PC-3 (cell line): ENCODE measurements at regions of chr1 and their contacts with region 1.

Region 1: DNA sequence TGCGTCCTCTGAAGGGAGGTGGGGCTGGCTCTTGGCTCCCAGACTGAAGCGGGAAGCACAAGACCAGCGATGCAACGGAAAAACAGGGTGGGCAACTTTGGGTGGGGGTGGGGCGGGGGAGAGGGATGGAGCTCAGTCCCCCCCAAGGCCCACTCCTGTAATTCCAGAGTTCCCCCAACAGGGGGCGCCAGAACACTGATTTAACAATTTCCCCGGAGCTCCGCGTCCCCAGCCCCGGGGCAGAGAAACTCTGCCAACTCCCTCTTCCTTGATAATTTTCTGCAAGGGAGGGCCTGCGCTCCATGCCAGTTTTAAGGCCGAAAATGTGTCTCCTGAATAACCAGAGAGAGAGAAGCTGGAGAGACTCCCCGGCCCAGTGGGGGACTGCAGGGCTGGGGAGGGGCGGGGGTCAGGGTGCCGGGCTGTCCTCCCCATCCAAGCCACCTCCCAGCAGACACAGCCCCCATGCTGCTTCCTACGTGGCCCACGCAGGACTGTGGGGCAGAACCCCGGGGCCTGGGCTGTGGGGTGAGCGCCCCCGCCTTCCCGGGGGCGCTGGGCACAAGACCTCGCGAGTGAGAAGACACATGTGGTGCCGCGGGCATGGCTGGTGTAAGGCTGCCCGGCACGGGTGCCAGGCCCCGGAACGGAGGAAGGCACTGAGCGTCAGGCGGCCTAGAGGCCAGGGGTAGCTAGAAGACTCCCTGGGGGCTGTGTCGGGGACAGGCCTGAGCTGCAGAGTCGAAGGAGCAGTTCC is 51.4 kb downstream of the KIF21B start:
- DNase-seq: peak; percentile 93
- ATAC-seq: peak; percentile 10; the same call in 1 of the 2 replicates
- H3K4me3 ChIP-seq: peak overlapping the region; percentile 26; the same call in 1 of the 2 replicates
- H3K27ac ChIP-seq: no peak overlapping the region
- H3K4me1 ChIP-seq: peaks cover 15% of the 10 kb centered on the region
- H3K27me3 ChIP-seq: no peaks in the 10 kb centered on the region
- CTCF ChIP-seq: peak; percentile 98

Region 2: DNA sequence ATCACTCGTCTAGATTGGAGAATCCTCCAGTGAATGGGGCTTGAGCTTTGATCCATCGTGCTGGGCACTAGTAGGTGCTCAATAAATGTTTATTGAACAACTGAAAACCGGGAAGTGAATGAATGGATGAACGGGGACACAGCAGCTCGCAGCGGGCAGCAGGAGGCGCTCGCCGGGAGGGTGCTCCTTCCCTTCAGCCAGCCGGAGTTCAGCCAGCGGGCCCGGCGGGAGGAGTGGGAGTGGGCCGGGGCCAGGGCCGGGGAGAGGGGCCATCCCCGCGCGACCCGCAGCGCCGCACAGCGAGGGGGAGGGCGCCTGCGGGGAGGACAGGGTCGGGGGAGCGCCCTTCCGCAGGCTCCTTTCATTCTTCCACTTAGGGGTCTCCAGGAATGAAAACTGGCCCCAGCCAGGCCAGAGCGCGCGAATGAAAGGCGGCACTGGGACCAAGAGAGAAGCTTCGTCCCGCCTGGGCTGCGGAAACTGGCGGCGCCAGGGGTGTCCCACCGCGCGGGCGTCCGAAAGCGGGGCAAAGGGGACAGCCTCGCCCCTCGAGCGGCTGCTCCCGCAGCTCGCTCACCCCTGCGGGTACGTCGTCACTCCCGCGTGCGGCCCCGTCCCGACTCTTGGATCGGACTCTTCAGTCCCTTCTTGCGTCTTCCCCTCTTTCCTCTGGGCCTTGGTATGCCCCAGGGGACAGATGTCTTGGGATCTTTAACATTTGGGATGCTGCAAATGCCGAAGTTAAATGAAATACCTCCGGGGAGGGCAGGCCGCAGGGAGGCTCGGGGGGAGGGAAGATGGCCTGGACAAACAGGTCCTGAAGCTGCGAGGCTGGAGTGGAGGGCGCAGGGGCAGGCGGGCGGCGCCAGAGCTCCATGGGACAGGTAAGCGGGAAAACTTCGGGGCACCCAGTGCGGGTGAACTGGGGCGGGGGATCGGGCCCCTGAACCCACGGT is 81.0 kb before region 1 on chr1:
- CTCF ChIA-PET with region 1: interaction called, 14 read pairs
- POLR2A ChIA-PET with region 1: no interaction called
- intact Hi-C with region 1: loop called (anchors 2 kb)
- DNase-seq: peak; percentile 95
- ATAC-seq: peak; percentile 51
- H3K4me3 ChIP-seq: peak overlapping the region; percentile 67
- H3K27ac ChIP-seq: peak overlapping the region; percentile 74
- H3K4me1 ChIP-seq: peaks cover 59% of the 10 kb centered on the region
- H3K27me3 ChIP-seq: no peaks in the 10 kb centered on the region
- CTCF ChIP-seq: peak; percentile 100

Region 3: DNA sequence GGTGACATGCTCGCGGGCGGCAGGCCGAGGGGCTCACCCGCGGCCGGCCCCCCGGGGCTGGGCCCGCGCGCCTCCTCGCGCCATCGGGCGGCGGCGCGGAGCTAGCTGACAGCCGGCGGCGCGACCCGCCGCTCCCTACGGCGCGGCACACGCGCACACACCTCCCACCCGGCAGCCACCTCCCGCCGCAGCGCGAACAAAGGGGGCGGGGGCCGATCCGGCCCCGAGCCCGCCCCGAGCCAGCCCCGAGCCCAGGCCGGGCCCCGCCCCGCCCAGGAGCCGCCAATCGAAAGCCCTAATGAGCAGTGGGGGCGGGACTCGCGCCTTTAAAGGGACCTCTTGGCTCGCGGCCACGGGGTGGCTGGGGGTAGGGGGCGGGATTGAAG is 51.4 kb after region 1 on chr1 and contains the start of gene KIF21B:
- CTCF ChIA-PET with region 1: interaction called, 10 read pairs
- POLR2A ChIA-PET with region 1: no interaction called
- intact Hi-C with region 1: no loop called
- DNase-seq: peak; percentile 52
- ATAC-seq: peak; percentile 55
- H3K4me3 ChIP-seq: no peak within 1 kb of the TSS
- H3K27ac ChIP-seq: no peak within 1 kb of the TSS
- H3K4me1 ChIP-seq: peaks cover 8% of the 10 kb centered on the region
- H3K27me3 ChIP-seq: peaks cover 56% of the 10 kb centered on the region
- CTCF ChIP-seq: no peak
- total RNA-seq, gene KIF21B: 0.46 and 0.66 TPM in 2 replicates

Region 4: DNA sequence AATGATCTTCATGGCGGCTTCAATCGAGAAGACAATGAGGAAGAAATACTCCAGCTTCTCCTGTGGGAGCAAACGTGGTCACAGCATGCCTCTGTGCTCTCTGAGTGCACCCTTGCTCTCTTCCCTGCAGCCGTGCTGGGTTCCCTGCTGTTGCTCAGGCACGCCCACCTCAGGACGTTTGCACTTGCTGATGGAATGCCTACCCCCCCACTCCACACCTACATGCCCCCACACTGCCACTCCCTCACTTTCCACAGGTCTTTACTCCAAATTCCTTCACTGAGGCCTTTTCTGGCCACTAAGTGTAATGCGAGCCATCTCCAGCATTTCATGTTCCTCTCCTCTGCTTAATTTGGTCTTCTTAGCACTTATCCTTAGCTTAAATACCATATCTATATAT is 121.8 kb after region 1 on chr1:
- CTCF ChIA-PET with region 1: no interaction called
- POLR2A ChIA-PET with region 1: no interaction called
- intact Hi-C with region 1: no loop called
- DNase-seq: no peak
- ATAC-seq: no peak
- H3K4me3 ChIP-seq: no peak overlapping the region
- H3K27ac ChIP-seq: no peak overlapping the region
- H3K4me1 ChIP-seq: no peaks in the 10 kb centered on the region
- H3K27me3 ChIP-seq: peaks cover 66% of the 10 kb centered on the region
- CTCF ChIP-seq: no peak

Region 5: DNA sequence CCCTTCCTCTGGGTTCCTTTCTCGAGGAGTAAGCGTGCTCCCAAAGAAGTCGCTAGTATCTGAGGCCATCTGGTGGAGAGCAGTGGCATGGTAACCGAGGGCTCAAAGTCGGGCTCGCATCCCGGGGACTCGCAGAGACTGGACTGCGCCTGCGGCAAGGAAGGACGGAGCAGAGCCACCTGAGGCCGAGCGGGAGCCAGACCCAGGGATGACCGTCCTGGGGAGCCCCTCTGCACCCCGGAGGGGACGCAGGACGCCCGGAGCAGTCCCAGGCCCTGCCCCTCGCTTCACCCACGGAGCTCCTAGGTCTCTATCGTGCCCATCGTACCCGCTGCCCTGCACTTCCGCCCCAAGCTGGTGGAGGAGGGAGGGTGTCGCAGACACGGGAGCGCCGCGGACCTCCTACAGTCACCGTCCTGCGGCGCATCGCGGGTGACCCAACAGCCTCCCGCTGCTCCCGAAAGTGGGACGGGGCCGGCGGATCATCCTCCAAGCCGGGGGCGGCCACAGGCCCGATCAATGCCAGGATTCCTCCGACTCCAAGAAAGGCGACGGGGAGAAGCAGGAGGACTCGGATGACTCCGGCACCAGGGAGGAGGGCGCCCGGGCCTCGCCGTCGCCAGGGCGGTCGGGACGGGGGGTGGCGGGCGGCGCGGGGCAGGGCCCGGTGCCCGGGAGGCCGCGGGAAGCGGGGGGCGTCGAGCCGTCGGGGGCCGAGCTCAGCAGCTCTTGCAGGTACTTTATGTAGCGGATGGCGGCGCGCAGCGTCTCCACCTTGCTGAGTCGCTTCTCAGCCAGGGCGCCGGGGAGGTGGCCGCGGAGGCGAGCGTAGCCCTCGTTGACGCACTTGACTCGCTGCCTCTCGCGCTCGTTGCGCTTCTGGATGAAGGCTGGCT is 142.4 kb after region 1 on chr1:
- CTCF ChIA-PET with region 1: interaction called, 27 read pairs
- POLR2A ChIA-PET with region 1: no interaction called
- intact Hi-C with region 1: loop called (anchors 1 kb)
- DNase-seq: peak; percentile 100
- ATAC-seq: peak; percentile 94
- H3K4me3 ChIP-seq: peak overlapping the region; percentile 73
- H3K27ac ChIP-seq: no peak overlapping the region
- H3K4me1 ChIP-seq: peaks cover 13% of the 10 kb centered on the region
- H3K27me3 ChIP-seq: no peaks in the 10 kb centered on the region
- CTCF ChIP-seq: peak; percentile 100